ENCODE measurements at regions of chr12 and their contacts with region 1.

Region 1: DNA sequence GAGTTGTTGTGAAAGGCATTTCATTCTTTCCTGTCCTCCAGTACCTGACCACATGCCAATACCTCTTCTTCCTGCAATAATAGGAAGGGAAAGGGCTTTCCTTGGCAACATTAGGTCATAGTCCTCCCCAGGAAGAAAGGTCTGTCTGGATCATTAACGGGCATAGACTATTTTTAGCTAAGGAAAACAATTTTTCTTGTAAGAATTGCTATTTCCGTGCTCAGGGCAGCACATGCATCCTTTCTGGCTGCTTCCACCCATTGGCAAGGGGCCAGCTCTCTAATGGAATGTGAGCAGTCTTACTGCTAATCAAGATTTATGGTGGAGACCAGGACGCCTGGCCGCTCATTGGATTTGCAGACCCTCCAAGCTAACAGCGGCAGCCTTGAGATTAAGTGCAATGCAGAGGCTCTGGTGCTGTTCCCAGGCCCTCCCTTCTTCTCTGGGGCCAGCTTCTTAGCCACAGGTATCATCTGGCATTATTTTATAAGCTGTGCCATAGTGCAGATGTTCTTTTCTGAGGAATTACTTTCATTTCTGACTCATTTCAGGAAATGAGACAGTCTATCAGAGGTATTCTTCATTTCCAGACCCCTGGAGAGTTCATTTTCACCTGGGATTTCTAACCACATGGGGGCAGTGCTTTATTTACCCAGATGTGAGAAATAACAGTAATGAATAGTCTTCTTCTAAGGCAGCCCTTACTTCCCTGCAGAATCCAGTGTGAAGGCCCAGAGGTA is 52.9 kb downstream of the ANO6 start:
- DNase-seq: peak; percentile 77 to 91
- H3K4me3 ChIP-seq: peak overlapping the region; percentile 30; the same call in 1 of the 2 replicates
- H3K27ac ChIP-seq: peak overlapping the region; percentile 94
- H3K4me1 ChIP-seq: peaks cover 67% of the 10 kb centered on the region
- H3K27me3 ChIP-seq: no peaks in the 10 kb centered on the region
- CTCF ChIP-seq: peak; percentile 70

Region 2: DNA sequence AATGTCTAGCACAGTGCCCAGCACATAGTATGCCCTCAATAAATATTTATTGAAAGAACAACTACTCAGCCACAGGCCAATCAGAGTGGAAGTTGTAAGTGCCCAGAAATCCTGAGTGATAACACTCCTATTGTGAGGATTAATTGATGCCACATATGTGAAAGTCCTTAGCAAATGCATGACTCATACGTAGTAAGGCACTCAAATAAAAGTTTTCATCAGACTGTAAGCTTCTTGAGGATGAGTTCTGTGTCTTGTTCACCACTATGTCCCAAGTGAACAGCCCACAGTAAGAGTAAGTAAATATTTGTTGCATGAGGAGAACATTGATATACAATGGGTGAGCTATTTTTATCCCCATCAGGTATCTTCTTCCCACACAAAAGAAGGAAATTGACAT is 77.6 kb before region 1 on chr12:
- CTCF ChIA-PET with region 1: no interaction called
- POLR2A ChIA-PET with region 1: no interaction called
- intact Hi-C with region 1: loop called (anchors 5 kb)
- DNase-seq: no peak
- H3K4me3 ChIP-seq: no peak overlapping the region
- H3K27ac ChIP-seq: no peak overlapping the region
- H3K4me1 ChIP-seq: peaks cover 23% of the 10 kb centered on the region
- H3K27me3 ChIP-seq: no peaks in the 10 kb centered on the region
- CTCF ChIP-seq: no peak

Region 3: GRCh38 chr12:45298716-45299692 is 30.2 kb after region 1 on chr12:
- CTCF ChIA-PET with region 1: interaction called, 8 read pairs
- POLR2A ChIA-PET with region 1: interaction called, 3 read pairs
- intact Hi-C with region 1: loop called (anchors 1 kb)
- DNase-seq: peak; percentile 52 to 93
- H3K4me3 ChIP-seq: peak overlapping the region; percentile 12; the same call in 1 of the 2 replicates
- H3K27ac ChIP-seq: peak overlapping the region; percentile 90
- H3K4me1 ChIP-seq: peaks cover 51% of the 10 kb centered on the region
- H3K27me3 ChIP-seq: no peaks in the 10 kb centered on the region
- CTCF ChIP-seq: no peak

Region 4: DNA sequence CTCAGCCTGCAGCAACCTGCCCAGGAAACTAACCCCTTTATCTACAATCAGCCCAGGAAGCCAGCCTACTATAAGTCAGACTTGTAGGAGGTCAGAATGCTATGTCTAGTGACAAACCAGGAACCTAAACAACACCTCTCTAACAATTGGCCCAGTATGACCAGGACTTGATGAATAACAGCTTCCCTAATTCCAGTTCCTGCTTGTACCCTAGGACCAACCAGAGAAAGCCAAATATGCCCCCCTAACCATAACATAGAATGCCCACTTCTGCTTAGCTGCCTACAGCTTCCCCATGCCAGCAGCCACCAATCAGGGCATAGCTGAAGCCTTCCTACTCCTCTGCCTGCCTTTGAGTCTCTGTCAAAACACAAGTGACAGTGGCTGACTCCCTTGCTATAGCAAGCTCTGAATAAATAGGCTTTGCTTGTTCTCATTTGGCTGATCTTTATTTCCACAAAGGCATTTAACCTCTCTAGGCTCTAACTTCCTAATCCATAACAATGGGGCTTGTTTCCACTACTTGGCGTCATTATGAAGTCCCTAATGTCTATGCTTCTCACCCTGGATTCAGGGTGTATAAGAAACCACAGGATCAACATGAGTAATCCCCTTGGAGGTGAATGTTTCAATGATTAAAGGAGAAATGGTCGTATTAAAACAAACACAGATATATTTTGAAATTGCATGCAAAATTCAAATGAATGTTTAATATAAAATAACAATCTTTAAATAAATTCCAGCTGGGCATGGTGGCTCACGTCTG is 167.3 kb after region 1 on chr12:
- CTCF ChIA-PET with region 1: no interaction called
- POLR2A ChIA-PET with region 1: no interaction called
- intact Hi-C with region 1: loop called (anchors 10 kb)
- DNase-seq: no peak
- H3K4me3 ChIP-seq: no peak overlapping the region
- H3K27ac ChIP-seq: no peak overlapping the region
- H3K4me1 ChIP-seq: peaks cover 18% of the 10 kb centered on the region
- H3K27me3 ChIP-seq: no peaks in the 10 kb centered on the region
- CTCF ChIP-seq: no peak

Region 5: DNA sequence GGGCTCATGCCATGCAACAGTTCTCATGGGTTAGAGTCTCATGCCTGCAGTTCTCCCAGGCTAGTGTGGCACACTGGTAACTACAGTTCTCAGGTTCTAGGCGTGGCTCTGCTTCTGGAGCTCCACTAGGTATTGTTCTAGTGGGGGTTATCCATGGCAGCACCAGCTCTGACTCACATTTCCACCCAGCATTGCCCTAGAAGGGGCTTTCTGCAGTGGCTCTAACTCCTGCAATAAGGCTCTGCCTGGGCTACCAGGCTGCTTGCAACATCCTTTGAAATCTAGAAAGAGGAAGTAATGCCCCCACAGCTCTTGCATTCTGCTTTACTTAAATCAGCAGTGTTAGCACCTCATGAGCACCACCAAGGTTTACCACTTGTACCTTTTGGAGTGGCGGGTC is 240.3 kb after region 1 on chr12:
- CTCF ChIA-PET with region 1: no interaction called
- POLR2A ChIA-PET with region 1: no interaction called
- intact Hi-C with region 1: no loop called
- DNase-seq: no peak
- H3K4me3 ChIP-seq: no peak overlapping the region
- H3K27ac ChIP-seq: no peak overlapping the region
- H3K4me1 ChIP-seq: no peaks in the 10 kb centered on the region
- H3K27me3 ChIP-seq: no peaks in the 10 kb centered on the region
- CTCF ChIP-seq: no peak

Measured in PC-9 (cell line).